Pancreas (tissue), 10 donors: ENCODE measurements at regions of chr5 and their contacts with region 1.

Region 1: GRCh38 chr5:128844354-128844923 is 120.8 kb upstream of the SLC27A6 start:
- DNase-seq: no peak
- ATAC-seq: no peak
- H3K4me3 ChIP-seq: no peak overlapping the region
- H3K27ac ChIP-seq: no peak overlapping the region
- H3K4me1 ChIP-seq: no peaks in the 10 kb centered on the region
- H3K27me3 ChIP-seq: no peaks in the 10 kb centered on the region
- CTCF ChIP-seq: peak in 1 of 4 donors; percentile 28

Region 2: DNA sequence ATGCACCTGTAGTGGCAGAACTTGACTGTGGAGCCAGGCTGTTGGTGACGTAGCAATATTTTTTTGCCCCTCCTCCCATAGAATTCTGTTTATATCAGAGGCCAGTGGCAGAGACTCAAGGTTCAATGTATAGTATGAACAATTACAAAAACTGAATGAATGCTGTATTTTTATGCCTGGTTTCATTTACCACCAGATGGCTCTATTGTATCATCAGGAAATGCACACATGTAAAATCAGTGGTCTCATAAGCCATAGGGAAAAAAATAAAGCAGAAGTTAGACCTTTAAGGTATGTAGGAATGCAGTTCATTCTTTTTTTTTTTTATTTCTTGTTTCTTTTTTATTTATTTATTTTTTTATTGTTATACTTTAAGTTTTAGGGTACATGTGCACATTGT is 1097.7 kb before region 1 on chr5:
- intact Hi-C with region 1: no loop called
- DNase-seq: no peak
- ATAC-seq: peak in 1 of 4 donors; percentile 51
- H3K4me3 ChIP-seq: no peak overlapping the region
- H3K27ac ChIP-seq: no peak overlapping the region
- H3K4me1 ChIP-seq: no peaks in the 10 kb centered on the region
- H3K27me3 ChIP-seq: no peaks in the 10 kb centered on the region
- CTCF ChIP-seq: no peak

Region 3: GRCh38 chr5:128213340-128213739 is 631.1 kb before region 1 on chr5:
- intact Hi-C with region 1: loop called in 2 of 3 experiments (anchors 10 kb)
- DNase-seq: peak in 2 of 6 donors; percentile 16 to 60
- ATAC-seq: peak; percentile 53 to 80 (median 78)
- H3K4me3 ChIP-seq: no peak overlapping the region
- H3K27ac ChIP-seq: no peak overlapping the region
- H3K4me1 ChIP-seq: no peaks in the 10 kb centered on the region
- H3K27me3 ChIP-seq: no peaks in the 10 kb centered on the region
- CTCF ChIP-seq: peak in 3 of 4 donors; percentile 48 to 59 (median 50)

Region 4: DNA sequence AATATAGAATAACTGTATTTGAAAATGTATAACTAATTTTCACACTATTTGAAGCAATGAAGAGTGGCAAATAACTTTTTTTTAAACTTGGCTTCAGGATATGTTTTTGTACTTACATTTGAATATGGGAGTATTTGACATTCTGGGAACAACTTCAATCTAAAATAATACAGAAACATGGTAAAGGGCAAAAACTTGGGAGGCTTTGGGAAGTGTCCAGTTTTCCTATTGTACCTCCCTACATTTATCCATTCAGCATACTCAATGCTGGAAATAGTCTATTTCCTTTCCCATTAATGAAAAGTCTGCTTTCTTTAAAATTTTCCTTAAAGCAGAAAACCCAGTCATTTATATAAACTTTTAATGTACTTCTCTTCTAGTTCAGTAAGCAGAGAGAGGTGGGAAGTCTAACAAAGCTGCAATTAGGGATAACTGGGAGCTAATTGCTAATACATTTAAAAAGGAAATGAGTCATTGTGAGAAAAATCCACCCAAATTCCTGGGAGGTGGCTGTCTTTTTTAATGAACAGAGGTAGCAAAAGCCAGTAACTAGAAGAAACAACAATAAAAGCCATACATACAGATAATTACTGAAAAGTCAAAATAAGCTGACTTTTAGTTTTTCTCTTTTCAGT is 435.2 kb before region 1 on chr5:
- intact Hi-C with region 1: no loop called
- DNase-seq: no peak
- ATAC-seq: no peak
- H3K4me3 ChIP-seq: no peak overlapping the region
- H3K27ac ChIP-seq: no peak overlapping the region
- H3K4me1 ChIP-seq: no peaks in the 10 kb centered on the region
- H3K27me3 ChIP-seq: no peaks in the 10 kb centered on the region
- CTCF ChIP-seq: no peak

Region 5: DNA sequence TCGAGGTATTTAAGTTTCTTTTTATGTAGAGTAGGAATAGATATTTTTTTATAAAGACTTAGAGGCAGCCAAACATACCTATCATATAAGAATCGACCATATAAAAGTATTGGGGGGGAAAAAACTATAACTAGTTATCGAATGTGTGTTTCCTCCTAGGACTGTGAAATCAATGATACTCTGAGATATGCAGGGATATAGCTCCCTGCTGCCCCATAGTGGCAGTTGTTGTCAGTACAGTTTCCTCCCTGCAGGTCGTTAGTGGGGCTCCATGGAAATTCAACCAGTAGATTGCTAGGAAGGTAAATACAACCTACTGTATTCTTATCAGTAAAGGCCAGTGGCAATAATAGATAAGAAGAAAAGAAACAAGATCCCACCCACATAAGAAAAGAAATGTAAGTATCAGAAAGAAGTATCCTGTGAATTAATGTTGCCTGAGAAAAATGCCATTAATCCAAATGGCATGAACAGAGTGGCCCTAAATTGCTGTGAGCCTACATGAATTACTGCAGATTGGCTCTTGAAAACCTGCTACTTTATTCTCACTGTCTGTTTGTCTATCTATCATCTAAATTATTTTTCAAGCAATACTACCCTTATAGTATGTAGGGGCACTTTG is 169.5 kb before region 1 on chr5:
- intact Hi-C with region 1: loop called in 1 of 3 experiments (anchors 5 kb)
- DNase-seq: peak in 4 of 6 donors; percentile 14 to 65 (median 50)
- ATAC-seq: peak; percentile 61 to 87 (median 71)
- H3K4me3 ChIP-seq: no peak overlapping the region
- H3K27ac ChIP-seq: no peak overlapping the region
- H3K4me1 ChIP-seq: no peaks in the 10 kb centered on the region
- H3K27me3 ChIP-seq: no peaks in the 10 kb centered on the region
- CTCF ChIP-seq: peak; percentile 36 to 46 (median 41)